Left colon (tissue), 2 donors: ENCODE measurements at regions of chr11 and their contacts with region 1.

Region 1: GRCh38 chr11:120235024-120235861 is 4.7 kb upstream of the POU2F3 start:
- DNase-seq: peak; percentile 49 to 76
- ATAC-seq: peak; percentile 59

Region 2: DNA sequence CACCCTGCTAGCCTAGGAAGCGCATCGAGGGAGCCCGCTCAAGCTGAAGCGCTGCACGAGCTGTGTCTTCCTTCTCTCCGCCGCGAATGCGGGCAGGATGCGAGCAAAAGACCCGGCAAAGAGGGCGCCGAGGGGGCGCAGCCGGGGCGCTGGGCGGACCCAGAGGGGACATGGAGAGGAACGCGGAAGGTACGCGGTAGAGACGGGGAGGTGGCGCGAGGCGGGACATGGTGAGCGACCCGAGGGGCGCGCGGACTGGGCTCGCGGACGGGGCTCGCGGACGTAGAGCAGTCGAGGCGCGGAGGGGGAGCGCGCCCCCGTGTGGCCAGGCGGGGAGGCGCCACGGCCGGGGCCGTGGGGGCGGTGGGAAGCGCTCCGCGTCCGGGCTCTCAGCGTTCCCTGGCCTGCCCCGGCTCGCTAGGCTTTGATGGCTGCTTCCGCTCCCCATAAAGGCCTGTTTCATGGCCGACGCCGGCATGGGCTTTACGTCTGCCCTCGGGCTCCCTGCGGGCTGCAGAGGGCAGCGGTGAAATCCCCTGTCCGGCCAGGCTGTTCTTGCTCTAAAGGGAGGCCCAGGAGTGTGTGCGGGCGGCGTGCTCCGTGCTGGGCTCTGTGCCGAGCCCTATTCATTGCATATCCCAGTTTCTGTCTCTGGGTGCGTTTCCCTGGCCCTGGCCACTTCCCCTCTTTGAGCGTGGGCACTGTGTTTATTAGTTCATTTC is 66.1 kb before region 1 on chr11:
- intact Hi-C with region 1: no loop called
- DNase-seq: peak; percentile 42 to 67
- ATAC-seq: peak; percentile 86

Region 3: DNA sequence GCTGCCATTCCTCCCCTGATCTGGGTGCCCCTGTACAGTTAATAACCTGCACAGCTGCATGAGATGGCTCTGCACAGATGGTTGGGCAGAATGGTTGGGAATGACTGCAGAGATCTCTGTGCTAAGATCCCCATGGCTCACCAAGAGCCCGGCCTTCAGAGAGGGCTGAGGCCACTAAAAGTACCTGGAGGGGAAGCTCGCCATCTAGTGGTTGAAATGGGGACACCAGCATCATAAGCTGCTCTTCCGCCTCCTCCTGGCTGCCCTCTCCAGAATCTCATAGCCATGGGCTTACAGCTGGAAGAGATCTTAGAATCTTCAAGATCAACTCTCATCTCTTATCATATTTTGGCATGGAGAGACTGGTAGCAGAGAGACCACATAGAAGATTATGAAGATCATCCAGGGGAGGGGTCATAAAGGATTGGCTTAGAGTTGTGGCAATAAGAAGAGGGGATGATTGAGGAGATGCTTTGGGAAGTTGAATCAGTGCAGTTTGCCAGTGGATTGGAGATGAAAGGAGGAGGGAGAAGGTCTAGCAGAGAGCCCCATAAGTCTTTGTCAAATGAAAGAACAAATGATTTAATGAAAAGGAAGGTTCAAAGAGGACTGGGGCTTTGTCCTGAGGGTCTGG is 67.9 kb after region 1 on chr11:
- intact Hi-C with region 1: loop called in 1 of 2 experiments (anchors 5 kb)
- DNase-seq: peak; percentile 70 to 86
- ATAC-seq: peak; percentile 61